Motor neuron (in vitro differentiated cells): ENCODE measurements at regions of chr10 and their contacts with region 1.

Region 1: GRCh38 chr10:52313933-52314816 is at the start of gene DKK1:
- ATAC-seq: peak; percentile 79 to 86 (median 81)
- H3K4me3 ChIP-seq: peak within 1 kb of the TSS; percentile 46 to 59 (median 51)
- H3K27ac ChIP-seq: no peak within 1 kb of the TSS
- H3K4me1 ChIP-seq: no peaks in the 10 kb centered on the region
- total RNA-seq, gene DKK1: 0.92 to 121 (median 3.9) TPM

Region 2: GRCh38 chr10:52488606-52489485 is 174.7 kb after region 1 on chr10:
- in situ Hi-C with region 1: loop called in 6 of 9 experiments (anchors 5 to 25 kb)
- ATAC-seq: peak in 3 of 8 experiments; percentile 13 to 44 (median 40)
- H3K4me3 ChIP-seq: no peak overlapping the region
- H3K27ac ChIP-seq: no peak overlapping the region
- H3K4me1 ChIP-seq: peaks cover 0 to 3% of the 10 kb centered on the region in 2 donors

Region 3: GRCh38 chr10:52621635-52622079 is 307.5 kb after region 1 on chr10:
- in situ Hi-C with region 1: no loop called
- ATAC-seq: peak in 6 of 8 experiments; percentile 45 to 70 (median 52)
- H3K4me3 ChIP-seq: no peak overlapping the region
- H3K27ac ChIP-seq: no peak overlapping the region
- H3K4me1 ChIP-seq: peaks cover 0 to 2% of the 10 kb centered on the region in 2 donors